A673 (cell line): ENCODE measurements at regions of chr4 and their contacts with region 1.

Region 1: DNA sequence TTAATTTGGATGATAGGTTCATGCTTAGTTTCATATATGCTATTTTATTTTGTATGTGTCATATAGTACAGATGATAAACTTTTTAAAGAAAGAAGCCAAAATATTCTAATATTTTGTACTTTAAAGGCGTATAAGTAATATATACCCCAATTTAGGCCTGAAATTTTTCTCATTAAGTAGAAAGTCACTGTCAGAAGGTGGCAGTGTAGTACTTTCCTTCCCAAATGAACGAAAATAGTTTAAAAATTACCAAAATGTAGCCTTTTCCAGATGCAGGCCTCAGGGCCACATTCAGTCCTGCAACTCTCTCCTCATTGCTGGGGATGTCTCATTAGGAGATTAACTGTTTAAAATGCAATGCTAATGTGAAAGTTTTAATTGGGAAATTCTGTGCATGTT is 1263.6 kb downstream of the C4orf33 start:
- DNase-seq: peak; percentile 76
- H3K4me3 ChIP-seq: no peak overlapping the region
- H3K27ac ChIP-seq: no peak overlapping the region
- H3K4me1 ChIP-seq: peaks cover 15% of the 10 kb centered on the region
- H3K27me3 ChIP-seq: no peaks in the 10 kb centered on the region
- CTCF ChIP-seq: peak; percentile 68

Region 2: GRCh38 chr4:130534651-130535050 is 175.1 kb after region 1 on chr4:
- CTCF ChIA-PET with region 1: no interaction called
- POLR2A ChIA-PET with region 1: no interaction called
- intact Hi-C with region 1: loop called (anchors 2 kb)
- DNase-seq: peak; percentile 95
- H3K4me3 ChIP-seq: no peak overlapping the region
- H3K27ac ChIP-seq: peak overlapping the region; percentile 96
- H3K4me1 ChIP-seq: peaks cover 34% of the 10 kb centered on the region
- H3K27me3 ChIP-seq: no peaks in the 10 kb centered on the region
- CTCF ChIP-seq: no peak

Region 3: DNA sequence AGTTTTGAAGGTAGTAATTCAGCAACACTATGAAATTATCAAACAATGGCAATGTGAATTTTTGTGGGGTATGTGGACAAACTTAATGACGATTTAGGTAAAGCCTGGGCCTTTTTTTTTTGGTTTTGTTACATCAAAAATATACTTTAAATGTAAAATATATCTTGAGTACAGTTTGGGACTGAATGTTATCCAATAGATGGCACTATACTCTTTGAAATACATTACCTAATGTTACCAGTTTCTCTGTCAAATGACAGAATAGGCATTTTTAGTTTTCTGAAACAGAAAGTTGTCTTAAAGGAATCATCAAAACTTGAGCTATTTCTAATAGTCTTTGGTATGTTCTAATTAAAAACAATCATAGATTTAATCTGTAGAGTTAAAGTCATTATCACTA is 388.3 kb after region 1 on chr4:
- CTCF ChIA-PET with region 1: no interaction called
- POLR2A ChIA-PET with region 1: no interaction called
- intact Hi-C with region 1: loop called (anchors 5 kb)
- DNase-seq: peak; percentile 29
- H3K4me3 ChIP-seq: no peak overlapping the region
- H3K27ac ChIP-seq: no peak overlapping the region
- H3K4me1 ChIP-seq: no peaks in the 10 kb centered on the region
- H3K27me3 ChIP-seq: no peaks in the 10 kb centered on the region
- CTCF ChIP-seq: peak; percentile 61

Region 4: GRCh38 chr4:130808492-130808891 is 448.9 kb after region 1 on chr4:
- CTCF ChIA-PET with region 1: no interaction called
- POLR2A ChIA-PET with region 1: no interaction called
- intact Hi-C with region 1: loop called (anchors 5 kb)
- DNase-seq: peak; percentile 70
- H3K4me3 ChIP-seq: no peak overlapping the region
- H3K27ac ChIP-seq: no peak overlapping the region
- H3K4me1 ChIP-seq: peaks cover 24% of the 10 kb centered on the region
- H3K27me3 ChIP-seq: no peaks in the 10 kb centered on the region
- CTCF ChIP-seq: peak; percentile 79

Region 5: GRCh38 chr4:131084997-131085396 is 725.5 kb after region 1 on chr4:
- CTCF ChIA-PET with region 1: no interaction called
- POLR2A ChIA-PET with region 1: no interaction called
- intact Hi-C with region 1: loop called (anchors 10 kb)
- DNase-seq: no peak
- H3K4me3 ChIP-seq: no peak overlapping the region
- H3K27ac ChIP-seq: no peak overlapping the region
- H3K4me1 ChIP-seq: no peaks in the 10 kb centered on the region
- H3K27me3 ChIP-seq: no peaks in the 10 kb centered on the region
- CTCF ChIP-seq: no peak